Panc1 (cell line): ENCODE measurements at regions of chr12 and their contacts with region 1.

Region 1: GRCh38 chr12:94057262-94058151 is 90.9 kb upstream of the PLXNC1 start:
- DNase-seq: no peak
- ATAC-seq: no peak
- H3K4me3 ChIP-seq: no peak overlapping the region
- H3K27ac ChIP-seq: no peak overlapping the region
- H3K4me1 ChIP-seq: no peaks in the 10 kb centered on the region
- H3K27me3 ChIP-seq: no peaks in the 10 kb centered on the region
- CTCF ChIP-seq: no peak

Region 2: GRCh38 chr12:93979189-93979588 is 78.3 kb before region 1 on chr12:
- CTCF ChIA-PET with region 1: no interaction called
- POLR2A ChIA-PET with region 1: no interaction called
- in situ Hi-C with region 1: no loop called
- intact Hi-C with region 1: no loop called
- DNase-seq: peak; percentile 15
- ATAC-seq: no peak
- H3K4me3 ChIP-seq: no peak overlapping the region
- H3K27ac ChIP-seq: no peak overlapping the region
- H3K4me1 ChIP-seq: 0 out of 2 replicates have a peak, but pooled peaks cover 3% of the 10 kb centered on the region
- H3K27me3 ChIP-seq: no peaks in the 10 kb centered on the region
- CTCF ChIP-seq: peak; percentile 64

Region 3: GRCh38 chr12:94071258-94071657 is 13.8 kb after region 1 on chr12:
- CTCF ChIA-PET with region 1: interaction called, 10 read pairs
- POLR2A ChIA-PET with region 1: no interaction called
- in situ Hi-C with region 1: no loop called
- intact Hi-C with region 1: no loop called
- DNase-seq: no peak
- ATAC-seq: no peak
- H3K4me3 ChIP-seq: no peak overlapping the region
- H3K27ac ChIP-seq: no peak overlapping the region
- H3K4me1 ChIP-seq: no peaks in the 10 kb centered on the region
- H3K27me3 ChIP-seq: no peaks in the 10 kb centered on the region
- CTCF ChIP-seq: no peak